CD8-positive, alpha-beta T cell (primary cell): ENCODE measurements at regions of chr22 and their contacts with region 1.

Region 1: GRCh38 chr22:37807410-37808293 is at the start of gene GCAT:
- DNase-seq: peak; percentile 63 to 92 (median 83)
- ATAC-seq: peak; percentile 91
- H3K4me3 ChIP-seq: peak within 1 kb of the TSS; percentile 51 to 55
- H3K4me3 Mint-ChIP-seq: peak within 1 kb of the TSS; percentile 75
- H3K27ac ChIP-seq: no peak within 1 kb of the TSS
- H3K27ac Mint-ChIP-seq: no peak within 1 kb of the TSS
- H3K4me1 ChIP-seq: peaks cover 37% of the 10 kb centered on the region
- H3K4me1 Mint-ChIP-seq: peaks cover 36% of the 10 kb centered on the region
- H3K27me3 ChIP-seq: peaks cover 17 to 66% of the 10 kb centered on the region in 2 experiments
- H3K27me3 Mint-ChIP-seq: peaks cover 47% of the 10 kb centered on the region
- CTCF ChIP-seq: no peak
- total RNA-seq, gene GCAT: 1.3 to 1.6 TPM

Region 2: DNA sequence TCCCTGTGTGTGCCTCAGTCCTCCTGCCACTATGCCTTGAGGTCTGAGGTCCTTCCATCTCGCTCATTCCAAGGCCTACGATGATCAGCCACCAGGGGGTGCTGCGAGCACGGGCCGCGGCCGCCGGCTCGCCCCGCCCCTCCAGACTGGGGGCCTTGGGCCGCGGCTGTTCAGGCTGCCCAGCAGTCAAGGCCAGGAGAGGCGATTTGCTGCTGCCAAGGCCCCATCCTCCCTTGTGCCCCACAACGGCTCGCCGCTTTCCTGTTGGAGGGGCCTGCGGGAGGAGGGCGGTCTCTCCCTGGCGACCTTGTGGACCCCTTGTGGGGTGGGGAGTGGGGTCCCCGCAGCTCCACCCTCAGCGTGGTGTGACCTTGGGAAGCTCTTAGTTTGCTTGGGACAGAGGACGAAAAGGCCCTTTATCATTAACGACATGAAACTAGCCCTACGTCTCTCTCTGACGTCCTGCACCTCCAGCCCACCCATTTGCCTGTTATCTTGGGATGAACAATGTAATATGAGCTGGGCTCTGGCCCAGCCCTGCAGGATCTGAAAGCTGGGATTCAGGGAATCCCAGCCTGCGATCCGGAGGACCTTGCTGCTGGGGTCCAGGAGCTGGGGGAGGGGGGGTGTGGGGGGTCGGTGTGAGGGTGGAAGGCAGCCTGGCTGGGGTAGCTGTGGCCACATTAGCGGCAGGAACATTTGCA is 10.2 kb after region 1 on chr22:
- CTCF ChIA-PET with region 1: interaction called, 41 read pairs
- POLR2A ChIA-PET with region 1: interaction called, 5 read pairs
- intact Hi-C with region 1: loop called in 1 of 2 experiments (anchors 1 kb)
- DNase-seq: peak; percentile 64 to 88 (median 81)
- ATAC-seq: peak; percentile 86
- H3K4me3 ChIP-seq: peak overlapping the region; percentile 20 to 38
- H3K4me3 Mint-ChIP-seq: peak overlapping the region; percentile 65
- H3K27ac ChIP-seq: no peak overlapping the region
- H3K27ac Mint-ChIP-seq: no peak overlapping the region
- H3K4me1 ChIP-seq: peaks cover 16% of the 10 kb centered on the region
- H3K4me1 Mint-ChIP-seq: peaks cover 15% of the 10 kb centered on the region
- H3K27me3 ChIP-seq: peaks cover under 1 to 4% of the 10 kb centered on the region in 2 experiments
- H3K27me3 Mint-ChIP-seq: peaks cover 17% of the 10 kb centered on the region
- CTCF ChIP-seq: peak; percentile 86

Region 3: GRCh38 chr22:37953437-37954179 is 146.0 kb after region 1 on chr22 and contains the starts of genes C22orf23 and POLR2F:
- CTCF ChIA-PET with region 1: no interaction called
- POLR2A ChIA-PET with region 1: no interaction called
- intact Hi-C with region 1: loop called in 1 of 2 experiments (anchors 5 kb)
- DNase-seq: peak; percentile 88 to 98 (median 97)
- ATAC-seq: peak; percentile 94
- H3K4me3 ChIP-seq: peak within 1 kb of the TSS; percentile 91 to 98
- H3K4me3 Mint-ChIP-seq: peak within 1 kb of the TSS; percentile 100
- H3K27ac ChIP-seq: peak within 1 kb of the TSS; percentile 62 to 79
- H3K27ac Mint-ChIP-seq: peak within 1 kb of the TSS; percentile 98
- H3K4me1 ChIP-seq: peaks cover 13% of the 10 kb centered on the region
- H3K4me1 Mint-ChIP-seq: peaks cover 45% of the 10 kb centered on the region
- H3K27me3 ChIP-seq: peaks cover 0 to 6% of the 10 kb centered on the region in 2 experiments
- H3K27me3 Mint-ChIP-seq: peaks cover 12% of the 10 kb centered on the region
- CTCF ChIP-seq: no peak
- total RNA-seq, gene C22orf23: 0.43 TPM in 1 of 2 experiments, not detected in the other
- total RNA-seq, gene POLR2F: 22.7 to 25.6 TPM